T-cell (primary cell): ENCODE measurements at regions of chr11 and their contacts with region 1.

Region 1: GRCh38 chr11:12043959-12044819 is 35.8 kb upstream of the DKK3 start:
- DNase-seq: peak in 33 of 35 experiments; percentile 10 to 82 (median 45)
- ATAC-seq: peak; percentile 62 to 81 (median 71)
- H3K4me3 ChIP-seq: no peak overlapping the region
- H3K4me3 Mint-ChIP-seq: no peak overlapping the region
- H3K27ac ChIP-seq: no peak overlapping the region
- H3K27ac Mint-ChIP-seq: no peak overlapping the region
- H3K4me1 ChIP-seq: peaks cover 0 to 10% of the 10 kb centered on the region in 2 experiments
- H3K4me1 Mint-ChIP-seq: peaks cover 3 to 7% (median 4%) of the 10 kb centered on the region in 3 donors
- H3K27me3 ChIP-seq: peaks cover 0 to 16% of the 10 kb centered on the region in 2 experiments
- H3K27me3 Mint-ChIP-seq: peaks cover 0 to 8% of the 10 kb centered on the region in 2 donors

Region 2: GRCh38 chr11:11931461-11932055 is 112.6 kb before region 1 on chr11:
- CTCF ChIA-PET with region 1: interaction called, 7 to 21 read pairs
- POLR2A ChIA-PET with region 1: no interaction called
- DNase-seq: peak in 6 of 35 experiments; percentile 0 to 61 (median 2)
- ATAC-seq: peak in 2 of 4 experiments; percentile 43 to 54
- H3K4me3 ChIP-seq: no peak overlapping the region
- H3K4me3 Mint-ChIP-seq: no peak overlapping the region
- H3K27ac ChIP-seq: no peak overlapping the region
- H3K27ac Mint-ChIP-seq: no peak overlapping the region
- H3K4me1 ChIP-seq: no peaks in the 10 kb centered on the region
- H3K4me1 Mint-ChIP-seq: peaks cover 0 to 7% (median 2%) of the 10 kb centered on the region in 3 donors
- H3K27me3 ChIP-seq: no peaks in the 10 kb centered on the region
- H3K27me3 Mint-ChIP-seq: no peaks in the 10 kb centered on the region

Region 3: GRCh38 chr11:12281571-12282478 is 237.6 kb after region 1 on chr11:
- CTCF ChIA-PET with region 1: interaction called, 47 to 85 read pairs
- POLR2A ChIA-PET with region 1: interaction called in 1 of 2 experiments, 3 read pairs
- DNase-seq: peak; percentile 15 to 86 (median 69)
- ATAC-seq: peak; percentile 61 to 67 (median 63)
- H3K4me3 ChIP-seq: no peak overlapping the region
- H3K4me3 Mint-ChIP-seq: no peak overlapping the region
- H3K27ac ChIP-seq: no peak overlapping the region
- H3K27ac Mint-ChIP-seq: no peak overlapping the region
- H3K4me1 ChIP-seq: peaks cover 0 to 8% of the 10 kb centered on the region in 2 experiments
- H3K4me1 Mint-ChIP-seq: peaks cover 0 to 2% (median 0%) of the 10 kb centered on the region in 3 donors
- H3K27me3 ChIP-seq: peaks cover 0 to 4% of the 10 kb centered on the region in 2 experiments
- H3K27me3 Mint-ChIP-seq: no peaks in the 10 kb centered on the region

Region 4: GRCh38 chr11:12288931-12289666 is 244.9 kb after region 1 on chr11:
- CTCF ChIA-PET with region 1: interaction called, 5 to 47 read pairs
- POLR2A ChIA-PET with region 1: no interaction called
- DNase-seq: no peak
- ATAC-seq: no peak
- H3K4me3 ChIP-seq: no peak overlapping the region
- H3K4me3 Mint-ChIP-seq: no peak overlapping the region
- H3K27ac ChIP-seq: no peak overlapping the region
- H3K27ac Mint-ChIP-seq: no peak overlapping the region
- H3K4me1 ChIP-seq: peaks cover 4 to 15% of the 10 kb centered on the region in 2 experiments
- H3K4me1 Mint-ChIP-seq: peaks cover 10 to 25% (median 12%) of the 10 kb centered on the region in 3 donors
- H3K27me3 ChIP-seq: peaks cover 0 to 4% of the 10 kb centered on the region in 2 experiments
- H3K27me3 Mint-ChIP-seq: no peaks in the 10 kb centered on the region